ENCODE measurements at regions of chr2 and their contacts with region 1.

Region 1: DNA sequence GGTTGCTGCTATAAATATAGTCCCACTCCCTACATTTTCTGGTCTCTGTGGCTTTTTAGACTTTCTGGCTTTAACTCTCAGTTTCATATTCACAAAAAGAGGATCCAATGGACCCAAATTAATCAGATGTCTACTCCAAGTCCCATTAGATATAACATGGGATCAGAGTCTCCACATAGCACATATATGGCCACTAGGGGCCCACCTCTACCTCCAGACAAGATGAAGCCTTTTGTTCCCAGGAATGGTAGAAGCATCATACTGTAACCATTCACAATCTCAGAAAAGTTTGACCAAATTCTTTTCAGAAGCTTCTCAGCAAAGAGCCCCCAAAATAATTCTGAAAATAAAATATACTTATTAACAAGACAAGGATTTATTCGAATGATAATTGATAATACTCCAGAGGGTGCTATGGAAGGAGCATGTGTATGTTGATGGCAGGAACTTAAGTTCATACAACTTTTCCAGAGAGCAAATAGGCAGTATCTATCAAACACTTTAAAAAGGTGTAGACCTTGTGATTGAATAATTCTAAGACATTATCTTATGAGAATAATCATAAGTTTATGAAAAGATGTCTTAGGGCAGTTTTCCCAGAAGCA is 382.3 kb upstream of the CRIM1 start:
- DNase-seq: peak in 1 of 2 donors; percentile 54
- ATAC-seq: peak in 2 of 3 donors; percentile 64 to 71
- H3K4me3 ChIP-seq: no peak overlapping the region
- H3K4me3 Mint-ChIP-seq: no peak overlapping the region
- H3K27ac ChIP-seq: no peak overlapping the region
- H3K27ac Mint-ChIP-seq: no peak overlapping the region
- H3K4me1 ChIP-seq: no peaks in the 10 kb centered on the region
- H3K4me1 Mint-ChIP-seq: peaks cover 0 to 5% of the 10 kb centered on the region in 2 donors
- H3K27me3 ChIP-seq: no peaks in the 10 kb centered on the region
- H3K27me3 Mint-ChIP-seq: peaks cover 15 to 23% of the 10 kb centered on the region in 2 donors
- CTCF ChIP-seq: peak; percentile 61

Region 2: GRCh38 chr2:35547984-35548570 is 425.2 kb before region 1 on chr2:
- intact Hi-C with region 1: no loop called
- DNase-seq: no peak
- ATAC-seq: no peak
- H3K4me3 ChIP-seq: no peak overlapping the region
- H3K4me3 Mint-ChIP-seq: no peak overlapping the region
- H3K27ac ChIP-seq: no peak overlapping the region
- H3K27ac Mint-ChIP-seq: no peak overlapping the region
- H3K4me1 ChIP-seq: no peaks in the 10 kb centered on the region
- H3K4me1 Mint-ChIP-seq: no peaks in the 10 kb centered on the region
- H3K27me3 ChIP-seq: no peaks in the 10 kb centered on the region
- H3K27me3 Mint-ChIP-seq: no peaks in the 10 kb centered on the region
- CTCF ChIP-seq: no peak

Region 3: DNA sequence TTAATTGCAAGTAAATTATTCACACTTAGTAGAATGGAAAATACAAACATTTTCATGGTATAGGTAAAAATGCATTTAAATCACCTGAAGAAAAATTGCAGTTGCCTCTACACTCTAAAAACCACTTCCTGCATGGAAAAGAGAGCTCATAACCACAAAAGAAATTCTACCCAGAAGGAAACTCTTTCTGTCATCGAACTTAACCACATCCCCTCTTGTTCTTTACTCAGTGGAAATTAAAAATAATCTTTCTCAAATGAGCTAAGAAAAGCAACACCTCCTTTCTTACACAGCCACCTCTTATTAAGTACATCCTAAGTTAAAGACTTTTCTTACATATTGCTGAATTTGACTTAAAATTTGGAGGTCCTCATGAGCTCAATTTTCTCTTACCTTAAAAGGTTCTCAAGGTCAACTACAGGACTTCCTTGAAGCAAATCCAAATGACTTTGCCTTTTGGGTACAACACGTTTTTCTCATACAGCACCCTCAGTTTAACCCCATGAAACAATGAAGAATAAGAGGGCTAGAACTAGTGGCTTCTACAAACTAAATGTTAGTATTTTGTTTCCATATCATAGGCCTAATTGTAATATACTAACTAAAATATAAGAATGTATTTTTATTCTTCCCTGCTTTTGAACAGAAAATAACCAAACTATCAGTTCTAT is 273.2 kb after region 1 on chr2:
- intact Hi-C with region 1: loop called (anchors 10 kb)
- DNase-seq: peak in 1 of 2 donors; percentile 70
- ATAC-seq: peak; percentile 60 to 83 (median 75)
- H3K4me3 ChIP-seq: no peak overlapping the region
- H3K4me3 Mint-ChIP-seq: peak overlapping the region; percentile 83
- H3K27ac ChIP-seq: peak overlapping the region; percentile 28
- H3K27ac Mint-ChIP-seq: peak overlapping the region; percentile 85 to 90
- H3K4me1 ChIP-seq: peaks cover 35% of the 10 kb centered on the region
- H3K4me1 Mint-ChIP-seq: peaks cover 74 to 76% of the 10 kb centered on the region in 2 donors
- H3K27me3 ChIP-seq: no peaks in the 10 kb centered on the region
- H3K27me3 Mint-ChIP-seq: no peaks in the 10 kb centered on the region
- CTCF ChIP-seq: no peak

Region 4: GRCh38 chr2:36329746-36330472 is 356.7 kb after region 1 on chr2:
- intact Hi-C with region 1: loop called (anchors 5 kb)
- DNase-seq: no peak
- ATAC-seq: no peak
- H3K4me3 ChIP-seq: no peak overlapping the region
- H3K4me3 Mint-ChIP-seq: no peak overlapping the region
- H3K27ac ChIP-seq: no peak overlapping the region
- H3K27ac Mint-ChIP-seq: no peak overlapping the region
- H3K4me1 ChIP-seq: no peaks in the 10 kb centered on the region
- H3K4me1 Mint-ChIP-seq: peaks cover 9 to 10% of the 10 kb centered on the region in 2 donors
- H3K27me3 ChIP-seq: no peaks in the 10 kb centered on the region
- H3K27me3 Mint-ChIP-seq: peaks cover 0 to 8% of the 10 kb centered on the region in 2 donors
- CTCF ChIP-seq: no peak